Activated naive CD4-positive, alpha-beta T cell treated with anti-CD3 and anti-CD28 coated beads for 36 hours (primary cell): ENCODE measurements at regions of chr2 and their contacts with region 1.

Region 1: GRCh38 chr2:32168513-32168912 is 2.8 kb downstream of the SLC30A6 start:
- DNase-seq: no peak
- H3K4me3 Mint-ChIP-seq: no peak overlapping the region
- H3K27ac Mint-ChIP-seq: no peak overlapping the region
- H3K4me1 Mint-ChIP-seq: peaks cover 46% of the 10 kb centered on the region
- H3K27me3 Mint-ChIP-seq: no peaks in the 10 kb centered on the region

Region 2: GRCh38 chr2:31950946-31951562 is 217.5 kb before region 1 on chr2:
- CTCF ChIA-PET with region 1: no interaction called
- intact Hi-C with region 1: loop called (anchors 1 kb)
- DNase-seq: peak; percentile 24
- H3K4me3 Mint-ChIP-seq: no peak overlapping the region
- H3K27ac Mint-ChIP-seq: peak overlapping the region; percentile 41
- H3K4me1 Mint-ChIP-seq: peaks cover 40% of the 10 kb centered on the region
- H3K27me3 Mint-ChIP-seq: no peaks in the 10 kb centered on the region

Region 3: DNA sequence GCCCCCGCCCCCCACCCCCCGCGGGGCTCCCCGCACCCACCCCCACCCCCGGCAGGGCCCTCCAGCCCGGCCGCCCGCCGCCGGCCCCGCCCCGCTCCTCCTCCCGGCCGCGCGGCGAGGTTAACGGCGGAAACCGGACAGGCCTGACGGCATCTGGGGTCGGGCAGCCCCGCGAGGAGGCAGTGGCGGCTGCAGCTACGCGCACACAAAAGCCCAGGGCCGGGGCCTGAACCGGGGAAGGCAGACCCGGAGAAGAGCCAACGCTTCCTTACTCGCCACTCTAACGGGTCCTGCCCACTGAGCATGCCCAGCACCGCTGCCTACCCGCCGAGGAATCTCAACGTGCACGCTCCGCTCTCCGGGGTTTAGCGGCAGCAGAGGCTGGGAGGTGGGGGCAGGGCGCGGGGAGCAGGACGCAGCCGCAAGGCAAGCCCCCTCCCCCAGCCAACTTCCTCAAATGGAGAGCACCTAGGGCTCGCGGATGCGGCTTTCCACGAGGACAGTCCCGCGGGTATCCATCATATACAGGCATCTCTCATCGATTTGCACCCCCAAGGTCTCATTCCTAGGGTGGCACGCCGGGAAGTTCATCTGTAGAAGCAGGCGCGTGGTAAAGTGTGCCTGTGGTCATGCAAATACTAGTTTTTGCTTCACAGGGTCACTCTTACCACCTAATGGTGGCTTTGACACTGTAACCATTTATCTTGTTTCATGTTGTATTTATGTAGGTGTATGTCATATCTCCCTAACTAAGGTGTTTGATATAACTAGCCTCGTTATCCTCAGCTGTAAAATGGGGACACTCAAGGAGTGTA is 157.6 kb before region 1 on chr2 and contains the start of gene MEMO1:
- CTCF ChIA-PET with region 1: no interaction called
- intact Hi-C with region 1: loop called (anchors 1 kb)
- DNase-seq: peak; percentile 96
- H3K4me3 Mint-ChIP-seq: peak within 1 kb of the TSS; percentile 85
- H3K27ac Mint-ChIP-seq: peak within 1 kb of the TSS; percentile 92
- H3K4me1 Mint-ChIP-seq: peaks cover 41% of the 10 kb centered on the region
- H3K27me3 Mint-ChIP-seq: no peaks in the 10 kb centered on the region
- total RNA-seq, gene MEMO1: 39.5 to 42.0 TPM

Region 4: DNA sequence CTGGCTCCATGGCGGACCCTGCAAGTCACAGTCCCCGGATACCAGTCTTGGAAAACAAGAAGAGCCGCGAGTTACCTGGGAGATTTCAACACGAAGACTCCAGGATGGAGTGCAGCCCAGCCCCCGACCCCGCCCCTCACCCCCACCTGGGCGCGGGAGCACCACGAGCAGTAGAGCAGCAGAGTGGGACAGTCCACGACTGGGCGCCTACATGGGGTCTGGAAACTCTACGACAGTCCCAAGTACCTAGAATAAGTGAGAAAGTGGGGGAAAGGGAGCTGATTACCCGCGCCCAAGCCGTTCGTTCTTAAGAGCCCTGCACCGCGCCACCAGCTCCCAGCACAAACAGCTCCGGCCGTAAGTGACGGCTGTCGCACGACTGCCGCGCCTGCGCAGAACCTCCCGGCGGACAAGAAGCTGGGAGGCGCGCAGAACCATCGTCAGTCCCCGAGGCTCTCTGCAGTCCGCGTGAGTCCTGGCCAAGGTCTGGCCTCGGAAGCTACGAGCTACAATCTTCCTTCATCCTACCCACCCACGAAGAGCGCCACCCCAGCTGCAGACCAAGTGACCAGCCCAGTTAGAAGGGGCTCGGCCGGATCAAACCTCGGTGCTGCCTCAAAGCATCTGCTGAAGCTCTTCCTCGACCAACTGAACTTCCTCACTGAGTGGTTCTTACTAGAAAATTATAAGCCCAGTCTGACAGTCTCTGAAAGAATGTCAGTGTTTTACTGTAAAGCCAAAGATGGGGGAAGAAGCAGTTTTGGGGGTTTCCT is 128.9 kb before region 1 on chr2 and contains the start of gene DPY30:
- CTCF ChIA-PET with region 1: no interaction called
- intact Hi-C with region 1: loop called (anchors 1 kb)
- DNase-seq: peak; percentile 93
- H3K4me3 Mint-ChIP-seq: peak within 1 kb of the TSS; percentile 84
- H3K27ac Mint-ChIP-seq: peak within 1 kb of the TSS; percentile 93
- H3K4me1 Mint-ChIP-seq: peaks cover 16% of the 10 kb centered on the region
- H3K27me3 Mint-ChIP-seq: no peaks in the 10 kb centered on the region
- total RNA-seq, gene DPY30: 80.1 to 88.5 TPM

Region 5: DNA sequence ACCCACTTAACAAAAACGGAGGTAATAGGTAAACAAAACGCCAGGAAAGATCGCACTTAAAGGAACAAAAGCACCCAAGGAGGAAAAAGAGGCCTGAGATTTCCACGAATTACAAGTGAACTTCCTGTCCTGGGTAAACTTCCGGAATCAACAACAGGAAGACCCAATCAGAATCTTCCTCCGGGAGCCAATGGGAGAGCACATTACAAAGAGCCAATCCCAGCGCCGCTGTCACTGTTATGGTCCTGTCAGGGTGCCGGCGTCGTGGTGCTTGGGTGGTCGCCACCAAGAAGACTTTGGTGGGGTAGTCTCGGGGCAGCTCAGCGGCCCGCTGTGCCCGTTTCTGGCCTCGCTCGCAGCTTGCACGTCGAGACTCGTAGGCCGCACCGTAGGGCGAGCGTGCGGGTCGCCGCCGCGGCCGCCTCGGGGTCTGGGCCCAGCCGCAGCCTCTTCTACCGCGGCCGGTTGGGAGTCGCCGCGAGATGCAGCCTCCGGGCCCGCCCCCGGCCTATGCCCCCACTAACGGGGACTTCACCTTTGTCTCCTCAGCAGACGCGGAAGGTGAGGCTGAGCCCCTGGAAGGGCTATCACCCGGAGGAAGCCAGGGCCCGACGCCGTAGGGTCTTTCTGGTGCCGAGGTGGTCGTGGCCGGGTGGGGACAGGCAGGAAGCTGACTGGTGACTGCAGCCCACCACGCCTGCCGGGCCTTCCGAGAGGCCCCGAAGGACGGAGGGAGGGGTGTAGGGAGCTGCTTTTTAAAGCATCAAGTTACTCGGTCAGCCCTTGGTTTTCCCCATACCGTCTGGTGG is 109.4 kb after region 1 on chr2 and contains the start of gene YIPF4:
- CTCF ChIA-PET with region 1: no interaction called
- intact Hi-C with region 1: loop called (anchors 1 kb)
- DNase-seq: peak; percentile 91
- H3K4me3 Mint-ChIP-seq: peak within 1 kb of the TSS; percentile 84
- H3K27ac Mint-ChIP-seq: peak within 1 kb of the TSS; percentile 93
- H3K4me1 Mint-ChIP-seq: peaks cover 22% of the 10 kb centered on the region
- H3K27me3 Mint-ChIP-seq: no peaks in the 10 kb centered on the region
- total RNA-seq, gene YIPF4: 36.5 to 39.7 TPM

Region 6: GRCh38 chr2:32356735-32357644 is 188.5 kb after region 1 on chr2 and contains the start of gene BIRC6:
- CTCF ChIA-PET with region 1: no interaction called
- intact Hi-C with region 1: loop called (anchors 1 kb)
- DNase-seq: peak; percentile 97
- H3K4me3 Mint-ChIP-seq: peak within 1 kb of the TSS; percentile 78
- H3K27ac Mint-ChIP-seq: peak within 1 kb of the TSS; percentile 85
- H3K4me1 Mint-ChIP-seq: peaks cover 31% of the 10 kb centered on the region
- H3K27me3 Mint-ChIP-seq: no peaks in the 10 kb centered on the region
- total RNA-seq, gene BIRC6: 51.4 to 52.9 TPM

Region 7: DNA sequence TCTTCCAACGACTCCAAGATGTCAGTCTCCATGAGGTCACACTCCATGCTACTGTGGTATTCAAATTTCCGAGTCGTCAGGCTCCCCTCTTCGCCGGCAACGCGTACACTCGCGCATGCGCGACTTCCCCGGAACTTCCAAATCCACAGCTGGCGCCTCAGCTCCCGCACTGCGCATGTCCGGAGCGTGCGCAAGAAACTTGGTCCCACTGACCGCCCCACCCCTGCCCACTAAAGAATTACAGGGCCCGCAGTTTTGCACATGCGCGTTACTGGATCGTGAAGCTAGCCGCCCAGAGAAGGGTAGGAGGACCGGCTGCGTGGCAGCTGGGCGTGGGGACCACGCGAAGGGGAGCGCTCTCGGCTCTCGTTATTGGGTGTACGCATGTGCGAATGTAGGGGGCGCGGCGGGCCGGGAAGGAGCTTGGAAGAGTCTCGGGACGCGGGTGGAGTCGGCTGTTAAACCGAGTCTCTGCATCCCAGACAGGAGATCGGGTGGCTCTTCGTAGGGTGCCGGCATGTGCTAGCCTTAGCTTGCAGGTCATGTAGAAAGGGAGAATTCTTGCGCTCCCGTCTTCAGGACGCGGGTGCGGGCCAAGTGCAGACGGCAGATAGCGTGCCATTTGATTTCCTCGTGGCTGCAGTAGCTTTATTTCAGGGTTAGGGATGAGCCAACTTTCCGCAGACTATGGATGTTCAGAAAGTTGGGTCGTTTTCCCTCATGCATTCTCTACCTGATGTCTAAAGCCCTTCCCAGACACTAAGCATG is 1430.8 kb after region 1 on chr2 and contains the start of gene FAM98A:
- CTCF ChIA-PET with region 1: no interaction called
- intact Hi-C with region 1: loop called (anchors 5 kb)
- DNase-seq: peak; percentile 98
- H3K4me3 Mint-ChIP-seq: peak within 1 kb of the TSS; percentile 95
- H3K27ac Mint-ChIP-seq: peak within 1 kb of the TSS; percentile 87
- H3K4me1 Mint-ChIP-seq: peaks cover 22% of the 10 kb centered on the region
- H3K27me3 Mint-ChIP-seq: no peaks in the 10 kb centered on the region
- total RNA-seq, gene FAM98A: 45.4 to 46.1 TPM